ENCODE measurements at regions of chrX and their contacts with region 1.

Region 1: DNA sequence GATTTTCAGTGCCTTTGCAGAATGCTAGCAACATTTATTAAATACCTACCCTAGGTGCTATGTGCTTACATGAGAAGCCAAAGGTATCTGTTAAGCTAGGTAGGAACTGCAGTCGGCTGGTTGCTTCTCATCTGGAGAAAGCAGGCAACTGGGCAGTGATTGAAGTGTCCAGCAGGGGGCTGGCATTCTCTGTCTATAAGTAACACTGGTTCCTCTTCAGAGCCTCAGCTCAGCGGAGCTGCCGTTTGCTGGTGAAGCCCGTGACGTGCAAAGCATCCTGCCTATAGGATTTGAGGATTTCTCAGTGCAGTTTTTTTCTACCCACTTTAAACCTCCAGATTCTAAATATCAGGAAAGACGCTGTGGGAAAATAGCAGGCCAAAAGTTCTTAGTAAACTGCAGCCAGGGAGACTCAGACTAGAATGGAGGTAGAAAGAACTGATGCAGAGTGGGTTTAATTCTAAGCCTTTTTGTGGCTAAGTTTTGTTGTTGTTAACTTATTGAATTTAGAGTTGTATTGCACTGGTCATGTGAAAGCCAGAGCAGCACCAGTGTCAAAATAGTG is at the start of gene GRPR:
- DNase-seq: peak; percentile 39
- ATAC-seq: peak; percentile 89
- H3K4me3 ChIP-seq: no peak within 1 kb of the TSS
- H3K27ac ChIP-seq: no peak within 1 kb of the TSS
- H3K4me1 ChIP-seq: no peaks in the 10 kb centered on the region
- H3K27me3 ChIP-seq: no peaks in the 10 kb centered on the region
- CTCF ChIP-seq: peak; percentile 74
- total RNA-seq, gene GRPR: not detected

Region 2: DNA sequence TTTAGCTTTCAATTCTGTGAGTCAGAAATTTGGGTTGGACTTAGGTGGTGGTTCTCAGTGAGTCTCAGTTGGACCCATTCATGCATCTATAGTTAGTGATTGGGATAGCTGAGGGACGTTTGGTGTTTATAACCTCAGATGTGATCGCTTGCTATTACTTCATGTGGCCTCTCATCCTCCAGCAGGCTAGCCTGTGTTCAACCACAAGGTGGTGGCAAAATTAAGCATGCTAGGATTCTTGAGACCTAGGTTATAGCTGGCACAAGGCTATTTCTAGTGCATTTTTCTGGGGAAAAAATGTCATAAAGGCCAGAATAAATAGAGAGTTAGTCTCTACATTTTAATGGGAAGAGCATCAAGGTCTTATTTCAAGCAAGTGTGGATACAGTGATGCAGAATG is 10.9 kb before region 1 on chrX:
- CTCF ChIA-PET with region 1: no interaction called
- POLR2A ChIA-PET with region 1: no interaction called
- in situ Hi-C with region 1: no loop called
- intact Hi-C with region 1: no loop called
- DNase-seq: no peak
- ATAC-seq: no peak
- H3K4me3 ChIP-seq: no peak overlapping the region
- H3K27ac ChIP-seq: no peak overlapping the region
- H3K4me1 ChIP-seq: no peaks in the 10 kb centered on the region
- H3K27me3 ChIP-seq: no peaks in the 10 kb centered on the region
- CTCF ChIP-seq: no peak

Region 3: DNA sequence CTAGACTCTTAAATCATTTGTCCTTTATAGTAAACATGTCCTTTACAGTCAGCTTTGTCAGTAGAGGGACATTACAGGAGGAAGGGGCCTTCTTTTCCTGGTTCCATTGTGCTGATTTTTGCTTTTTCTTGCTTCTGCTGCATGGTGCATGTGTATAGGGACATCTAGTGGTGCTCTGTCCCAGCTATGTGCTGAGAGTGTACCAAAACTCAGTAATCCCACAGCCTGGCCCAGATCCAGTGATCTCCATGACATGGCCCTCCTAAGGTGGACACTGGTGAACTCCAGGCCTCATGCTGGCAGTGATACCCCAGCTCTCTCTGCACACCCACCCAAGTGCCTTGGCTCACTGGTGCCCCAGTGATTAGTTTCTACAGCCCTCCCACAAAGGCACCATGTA is 89.1 kb after region 1 on chrX:
- CTCF ChIA-PET with region 1: no interaction called
- POLR2A ChIA-PET with region 1: no interaction called
- in situ Hi-C with region 1: no loop called
- intact Hi-C with region 1: no loop called
- DNase-seq: no peak
- ATAC-seq: no peak
- H3K4me3 ChIP-seq: no peak overlapping the region
- H3K27ac ChIP-seq: no peak overlapping the region
- H3K4me1 ChIP-seq: no peaks in the 10 kb centered on the region
- H3K27me3 ChIP-seq: no peaks in the 10 kb centered on the region
- CTCF ChIP-seq: no peak

Region 4: DNA sequence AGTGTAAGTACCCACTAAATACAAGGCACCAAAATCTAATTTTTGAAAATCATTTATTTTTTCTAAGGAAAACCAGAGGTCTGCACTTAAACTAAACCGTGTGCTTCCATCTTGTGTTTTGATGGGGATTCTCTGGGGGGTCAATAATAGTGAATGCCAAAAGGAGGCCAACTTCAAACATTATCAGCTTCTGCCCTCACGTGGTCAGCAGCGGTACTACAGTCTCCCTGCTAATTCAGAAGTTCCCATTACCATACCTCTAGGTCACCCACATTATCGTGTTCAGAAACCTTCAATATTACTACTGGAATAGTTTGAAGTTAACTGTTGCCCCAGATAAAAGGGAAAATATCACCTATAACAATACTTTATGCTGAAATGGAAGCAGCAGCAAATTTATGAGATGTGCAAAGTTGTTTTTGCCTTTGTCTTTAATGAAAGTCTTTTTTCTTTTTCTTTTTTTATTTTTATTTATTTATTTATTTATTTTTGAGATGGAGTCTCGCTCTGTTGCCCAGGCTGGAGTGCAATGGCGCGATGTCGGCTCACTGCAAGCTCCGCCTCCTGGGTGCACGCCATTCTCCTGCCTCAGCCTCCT is 571.9 kb after region 1 on chrX:
- CTCF ChIA-PET with region 1: no interaction called
- POLR2A ChIA-PET with region 1: no interaction called
- in situ Hi-C with region 1: no loop called
- intact Hi-C with region 1: loop called (anchors 10 kb)
- DNase-seq: peak; percentile 56
- ATAC-seq: no peak
- H3K4me3 ChIP-seq: no peak overlapping the region
- H3K27ac ChIP-seq: no peak overlapping the region
- H3K4me1 ChIP-seq: no peaks in the 10 kb centered on the region
- H3K27me3 ChIP-seq: no peaks in the 10 kb centered on the region
- CTCF ChIP-seq: peak; percentile 83

Measured in Panc1 (cell line).